PC-9 (cell line): ENCODE measurements at regions of chr5 and their contacts with region 1.

Region 1: DNA sequence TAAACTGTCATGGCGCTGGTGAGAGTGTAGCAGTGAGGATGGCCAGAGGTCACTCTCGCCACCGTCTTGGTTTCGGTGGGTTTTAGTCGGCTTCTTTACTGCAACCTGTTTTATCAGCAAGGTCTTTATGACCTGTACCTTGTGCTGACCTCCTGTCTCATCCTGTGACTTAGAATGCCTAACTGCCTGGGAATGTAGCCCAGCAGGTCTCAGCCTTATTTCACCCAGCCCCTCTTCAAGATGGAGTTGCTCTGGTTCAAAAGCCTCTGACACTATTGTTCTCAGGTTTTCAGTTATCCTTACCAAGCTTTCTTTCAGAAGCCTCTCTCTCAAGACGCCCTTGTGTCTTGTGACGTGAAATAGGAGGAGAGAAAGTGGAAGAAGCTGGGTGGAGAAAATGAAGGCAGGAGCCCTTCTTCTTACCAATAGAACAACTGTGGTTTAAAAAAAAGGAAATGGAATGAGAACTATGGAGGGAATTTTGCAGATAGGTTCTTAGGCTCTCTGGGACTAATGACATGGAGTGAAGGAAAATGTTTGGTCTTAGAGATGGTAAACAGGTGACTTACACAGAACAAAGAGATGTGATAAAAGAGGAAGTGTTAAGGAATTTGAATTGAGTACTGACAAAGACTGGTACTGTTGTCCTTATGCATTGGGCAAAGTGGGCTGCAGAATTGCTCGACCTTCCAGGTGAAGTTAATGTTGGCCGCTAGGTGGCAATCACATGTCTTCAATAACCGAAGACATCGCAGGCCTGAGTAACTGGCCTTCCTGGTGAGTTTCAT is 133.3 kb upstream of the RAI14 start:
- DNase-seq: peak; percentile 86 to 87
- H3K4me3 ChIP-seq: no peak overlapping the region
- H3K27ac ChIP-seq: peak overlapping the region; percentile 69
- H3K4me1 ChIP-seq: peaks cover 72% of the 10 kb centered on the region
- H3K27me3 ChIP-seq: no peaks in the 10 kb centered on the region
- CTCF ChIP-seq: peak; percentile 97

Region 2: DNA sequence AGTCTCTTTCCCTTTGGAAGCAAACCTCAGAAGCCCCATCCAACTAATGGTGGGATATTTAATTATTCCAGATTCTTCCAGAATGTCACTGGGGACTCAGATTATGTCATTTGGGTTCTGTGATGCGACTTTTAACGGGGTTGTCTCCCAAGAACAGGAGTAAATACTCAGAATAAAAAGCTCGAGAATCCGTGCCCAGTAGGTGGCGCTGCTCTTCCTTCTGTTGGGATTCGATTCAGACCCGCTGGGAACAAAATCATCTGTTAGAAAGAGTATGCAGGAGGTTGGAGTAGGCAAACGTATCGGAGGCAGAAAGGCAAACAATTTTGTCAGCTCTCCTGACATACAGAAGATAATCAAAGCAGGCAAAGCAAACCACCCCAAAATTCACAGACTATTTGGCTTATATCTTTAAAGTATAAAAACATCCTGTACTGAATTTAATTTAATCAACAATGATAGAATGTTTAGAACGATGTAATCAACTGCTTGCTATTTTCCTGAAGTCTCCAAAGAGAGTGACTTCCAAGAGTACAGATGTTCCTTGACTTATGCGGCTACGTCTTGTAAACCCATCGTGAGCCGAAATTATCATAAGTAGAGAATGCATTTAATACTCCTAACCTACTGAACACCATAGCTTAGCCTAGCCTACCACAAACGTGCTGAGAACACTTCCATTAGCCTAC is 36.5 kb before region 1 on chr5:
- CTCF ChIA-PET with region 1: interaction called, 4 read pairs
- POLR2A ChIA-PET with region 1: interaction called, 5 read pairs
- intact Hi-C with region 1: loop called (anchors 1 kb)
- DNase-seq: peak; percentile 78 to 89
- H3K4me3 ChIP-seq: no peak overlapping the region
- H3K27ac ChIP-seq: peak overlapping the region; percentile 95
- H3K4me1 ChIP-seq: peaks cover 46% of the 10 kb centered on the region
- H3K27me3 ChIP-seq: no peaks in the 10 kb centered on the region
- CTCF ChIP-seq: peak; percentile 99

Region 3: GRCh38 chr5:34608859-34609648 is 86.3 kb after region 1 on chr5:
- CTCF ChIA-PET with region 1: no interaction called
- POLR2A ChIA-PET with region 1: no interaction called
- intact Hi-C with region 1: loop called (anchors 1 kb)
- DNase-seq: peak; percentile 43 to 94
- H3K4me3 ChIP-seq: peak overlapping the region; percentile 12; the same call in 1 of the 2 replicates
- H3K27ac ChIP-seq: peak overlapping the region; percentile 82
- H3K4me1 ChIP-seq: peaks cover 39% of the 10 kb centered on the region
- H3K27me3 ChIP-seq: no peaks in the 10 kb centered on the region
- CTCF ChIP-seq: no peak

Region 4: GRCh38 chr5:34695275-34696027 is 172.7 kb after region 1 on chr5:
- CTCF ChIA-PET with region 1: no interaction called
- POLR2A ChIA-PET with region 1: no interaction called
- intact Hi-C with region 1: no loop called
- DNase-seq: no peak
- H3K4me3 ChIP-seq: no peak overlapping the region
- H3K27ac ChIP-seq: peak overlapping the region; percentile 30; the same call in 1 of the 2 replicates
- H3K4me1 ChIP-seq: peaks cover 33% of the 10 kb centered on the region
- H3K27me3 ChIP-seq: no peaks in the 10 kb centered on the region
- CTCF ChIP-seq: no peak

Region 5: DNA sequence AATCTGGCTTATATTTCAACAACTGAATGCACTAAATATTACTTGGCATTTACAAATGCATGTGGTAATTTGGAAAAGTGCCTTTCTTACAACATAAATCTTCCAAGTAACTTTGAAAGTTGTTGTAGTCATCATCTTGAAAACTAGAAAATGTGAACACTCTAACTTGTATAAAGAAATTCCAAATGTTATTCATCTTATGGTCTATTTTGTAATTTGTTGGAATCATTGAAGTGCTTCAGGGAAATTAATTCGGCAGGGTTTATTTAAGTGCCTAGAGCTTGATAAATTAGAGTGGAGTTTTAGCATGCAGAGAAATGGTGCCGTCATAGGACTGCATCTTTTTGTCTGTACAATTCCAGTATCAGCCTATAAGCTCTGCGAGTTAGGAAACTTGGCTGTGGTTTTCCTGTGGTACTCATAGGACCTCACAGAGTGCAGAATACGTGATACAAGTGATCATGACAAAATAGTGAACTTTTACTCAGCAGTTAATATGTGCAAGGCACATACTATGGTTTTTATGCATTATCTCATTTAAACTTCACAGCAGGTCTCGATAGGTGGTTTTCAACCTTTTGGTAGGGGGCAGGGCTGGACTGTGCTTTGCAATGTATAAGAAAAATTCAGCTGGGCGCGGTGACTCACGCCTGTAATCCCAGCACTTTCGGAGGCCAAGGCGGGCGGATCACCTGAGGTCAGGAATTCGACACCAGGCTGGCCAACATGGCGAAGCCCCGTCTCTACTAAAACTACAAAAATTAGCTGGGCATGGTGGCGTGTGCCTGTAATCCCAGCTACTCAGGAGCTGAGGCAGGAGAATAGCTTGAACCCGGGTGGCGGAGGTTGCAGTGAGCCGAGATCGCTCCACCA is 212.9 kb after region 1 on chr5:
- CTCF ChIA-PET with region 1: no interaction called
- POLR2A ChIA-PET with region 1: interaction called, 12 read pairs
- intact Hi-C with region 1: loop called (anchors 1 kb)
- DNase-seq: peak; percentile 50 to 67
- H3K4me3 ChIP-seq: no peak overlapping the region
- H3K27ac ChIP-seq: peak overlapping the region; percentile 20
- H3K4me1 ChIP-seq: peaks cover 14% of the 10 kb centered on the region
- H3K27me3 ChIP-seq: no peaks in the 10 kb centered on the region
- CTCF ChIP-seq: no peak

Region 6: DNA sequence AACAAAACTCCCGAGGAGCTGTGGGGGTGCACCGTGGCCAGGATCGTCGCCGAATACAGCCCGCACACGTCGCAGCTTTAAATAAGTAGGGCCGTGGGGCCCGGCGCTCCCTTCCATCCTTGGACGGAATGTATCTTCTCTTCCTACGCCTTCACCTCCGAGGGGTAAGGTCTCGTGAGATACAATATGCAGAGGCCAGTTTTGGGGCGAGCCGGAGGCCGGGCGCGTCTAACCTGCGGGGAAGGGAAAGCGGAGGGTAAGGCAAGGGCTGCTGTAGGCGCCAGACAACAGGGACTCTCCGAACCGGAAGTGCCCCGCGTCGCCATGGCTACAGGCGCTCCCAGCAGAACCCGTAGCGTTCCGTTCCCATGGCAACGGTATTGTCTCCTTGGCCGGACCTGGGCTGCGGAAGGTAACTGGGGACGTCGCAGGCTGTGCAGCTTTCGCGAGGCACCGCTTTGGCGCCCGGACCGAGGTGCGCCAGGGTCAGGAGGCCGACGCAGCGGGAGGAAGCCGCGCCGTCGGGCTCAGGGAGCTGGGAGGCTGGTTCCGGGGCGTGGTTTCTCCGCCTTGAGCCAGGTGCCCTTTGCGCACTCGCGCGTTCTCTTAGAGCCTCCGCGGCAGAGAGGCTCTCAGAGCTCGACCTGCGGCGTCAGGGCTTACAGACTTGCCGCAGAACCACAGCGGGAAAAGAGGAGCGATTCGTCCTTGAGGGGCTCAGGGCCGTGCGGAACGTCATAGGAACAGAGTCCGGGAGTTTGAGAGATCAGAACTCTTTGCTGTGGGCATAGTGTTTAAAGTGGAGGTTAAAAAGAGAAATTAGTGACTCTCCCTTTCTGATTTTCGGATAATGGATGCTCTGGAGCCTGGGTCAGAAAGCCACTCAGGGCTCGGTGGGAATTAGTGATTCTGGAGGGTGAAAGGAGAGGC is 316.3 kb after region 1 on chr5 and contains the start of gene TTC23L:
- CTCF ChIA-PET with region 1: interaction called, 4 read pairs
- POLR2A ChIA-PET with region 1: no interaction called
- intact Hi-C with region 1: loop called (anchors 1 kb)
- DNase-seq: peak; percentile 86 to 98
- H3K4me3 ChIP-seq: peak within 1 kb of the TSS; percentile 68
- H3K27ac ChIP-seq: peak within 1 kb of the TSS; percentile 21; the same call in 1 of the 2 replicates
- H3K4me1 ChIP-seq: peaks cover 6% of the 10 kb centered on the region
- H3K27me3 ChIP-seq: no peaks in the 10 kb centered on the region
- CTCF ChIP-seq: no peak
- total RNA-seq, gene TTC23L: 3.9 and 7.1 TPM in 2 replicates

Region 7: DNA sequence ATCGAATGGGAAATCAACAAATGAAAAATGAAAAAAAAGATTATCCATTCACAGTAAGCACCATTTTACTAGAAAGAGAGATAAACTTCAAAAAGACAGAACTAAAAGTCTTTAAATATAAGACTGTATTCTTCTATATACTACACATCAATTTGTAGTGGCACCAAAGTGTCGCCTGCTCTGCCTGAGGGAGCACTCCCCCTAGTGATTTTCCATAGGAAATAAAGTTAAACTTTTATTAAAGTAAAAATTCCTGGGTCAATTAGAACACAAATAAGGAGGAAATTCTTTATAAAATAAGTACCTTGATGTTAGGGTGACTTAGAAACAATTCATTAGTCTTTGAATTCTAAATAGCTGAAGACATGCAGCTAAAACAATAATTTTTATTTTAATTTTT is 382.8 kb after region 1 on chr5:
- CTCF ChIA-PET with region 1: no interaction called
- POLR2A ChIA-PET with region 1: interaction called, 10 read pairs
- intact Hi-C with region 1: no loop called
- DNase-seq: no peak
- H3K4me3 ChIP-seq: no peak overlapping the region
- H3K27ac ChIP-seq: no peak overlapping the region
- H3K4me1 ChIP-seq: no peaks in the 10 kb centered on the region
- H3K27me3 ChIP-seq: no peaks in the 10 kb centered on the region
- CTCF ChIP-seq: peak; percentile 65